Activated CD4-positive, alpha-beta T cell treated with anti-CD3 and anti-CD28 coated beads, Interleukin-2, amount 10 ng/mL, durations not matched to agents 24 days and 14 days (primary cell): ENCODE measurements at regions of chr2 and their contacts with region 1.

Region 1: GRCh38 chr2:96509114-96509846 is 4.1 kb upstream of the NEURL3 start:
- DNase-seq: peak; percentile 91
- H3K4me3 Mint-ChIP-seq: peak overlapping the region; percentile 28
- H3K27ac Mint-ChIP-seq: no peak overlapping the region
- H3K4me1 Mint-ChIP-seq: peaks cover 37% of the 10 kb centered on the region
- H3K27me3 Mint-ChIP-seq: no peaks in the 10 kb centered on the region

Region 2: DNA sequence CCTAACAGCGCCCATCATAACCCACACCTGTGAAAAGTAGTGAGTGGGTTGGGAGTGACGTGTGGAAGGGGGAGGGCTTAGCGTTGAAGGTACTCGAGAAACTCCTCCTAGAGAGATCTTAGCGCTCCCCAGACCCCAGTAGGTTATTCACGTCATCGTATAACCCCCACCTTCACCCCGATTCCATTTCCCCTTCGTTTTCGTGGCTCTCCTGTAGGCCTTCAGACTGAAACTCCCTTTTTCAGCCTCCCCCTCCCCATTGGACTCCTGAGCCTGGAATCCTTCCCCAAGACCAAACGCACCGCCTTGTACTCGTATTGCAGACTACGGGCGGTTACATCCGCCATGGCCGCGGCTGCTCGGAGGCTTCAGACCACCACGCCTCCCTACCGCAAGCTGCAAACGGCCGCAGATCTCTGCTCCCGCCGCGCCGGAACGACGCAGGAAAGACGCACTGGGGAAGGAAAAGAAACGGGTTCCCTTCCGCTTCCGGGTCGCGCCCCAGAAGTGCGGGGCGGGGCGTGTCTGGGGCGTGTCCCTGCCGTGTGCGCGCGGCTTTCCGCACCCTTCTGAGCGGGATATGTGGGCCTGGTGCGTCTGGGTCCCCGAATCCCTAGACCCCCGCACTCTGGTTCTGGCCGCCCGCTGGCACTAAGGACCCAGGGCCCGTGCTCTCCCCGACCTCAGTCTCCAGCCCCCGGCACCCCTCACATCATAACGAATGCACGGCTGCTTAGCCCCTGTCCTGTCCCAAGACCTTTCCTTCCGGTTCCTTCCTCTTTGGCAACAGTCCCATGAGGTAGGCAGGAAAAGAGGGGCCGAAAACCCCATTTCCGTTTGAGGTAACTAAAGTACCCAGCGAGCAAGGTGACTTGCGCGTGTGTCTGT is 203.9 kb before region 1 on chr2 and contains the start of gene SNRNP200:
- intact Hi-C with region 1: loop called (anchors 1 kb)
- DNase-seq: peak; percentile 97
- H3K4me3 Mint-ChIP-seq: peak within 1 kb of the TSS; percentile 100
- H3K27ac Mint-ChIP-seq: peak within 1 kb of the TSS; percentile 99
- H3K4me1 Mint-ChIP-seq: peaks cover 56% of the 10 kb centered on the region
- H3K27me3 Mint-ChIP-seq: no peaks in the 10 kb centered on the region
- total RNA-seq, gene SNRNP200: 197 and 203 TPM in 2 replicates

Region 3: DNA sequence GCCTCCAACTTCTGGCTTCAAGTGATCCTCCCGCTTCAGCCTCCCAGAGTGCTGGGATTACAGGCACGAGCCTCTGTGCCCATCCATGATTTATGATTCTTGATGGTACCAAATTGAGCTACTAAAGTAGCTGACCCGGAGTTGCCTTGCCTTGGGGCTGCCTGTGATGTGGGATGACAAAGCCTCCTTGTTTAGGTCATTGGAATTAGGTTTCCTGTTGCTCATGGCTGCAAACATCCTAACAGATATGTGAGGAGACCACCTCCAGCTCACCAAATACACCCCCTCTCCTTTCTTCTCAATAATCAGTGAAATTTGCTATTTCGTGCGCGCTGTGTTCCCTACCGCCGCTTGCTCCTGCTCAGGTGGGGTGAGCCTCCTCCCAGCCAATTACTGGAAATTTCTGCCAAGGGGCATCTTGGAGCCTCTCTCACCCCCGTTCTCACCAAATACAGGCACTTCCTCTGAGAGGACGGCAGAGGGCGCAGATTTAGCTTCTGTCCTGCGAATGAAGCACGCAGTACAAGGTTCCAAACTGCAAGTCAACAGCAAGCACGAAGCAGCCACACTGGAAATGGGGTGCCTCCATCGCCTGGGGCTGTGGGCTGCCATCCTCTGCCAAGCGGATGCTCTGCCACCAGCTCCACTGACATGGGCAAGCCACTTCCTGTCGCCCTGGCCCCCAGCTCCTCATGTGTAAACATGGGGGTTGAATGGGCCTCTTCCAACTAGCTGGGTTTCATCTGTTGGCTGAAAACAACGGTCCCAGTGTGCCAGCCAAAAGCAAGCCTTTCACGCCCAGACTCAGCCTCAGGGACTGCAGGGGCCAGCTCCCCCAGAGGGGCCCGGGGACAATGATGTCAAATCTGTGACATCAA is 102.0 kb before region 1 on chr2:
- intact Hi-C with region 1: loop called (anchors 1 kb)
- DNase-seq: peak; percentile 90
- H3K4me3 Mint-ChIP-seq: peak overlapping the region; percentile 41
- H3K27ac Mint-ChIP-seq: peak overlapping the region; percentile 80
- H3K4me1 Mint-ChIP-seq: peaks cover 13% of the 10 kb centered on the region
- H3K27me3 Mint-ChIP-seq: no peaks in the 10 kb centered on the region

Region 4: GRCh38 chr2:96485751-96486651 is 23.3 kb before region 1 on chr2:
- intact Hi-C with region 1: loop called (anchors 1 kb)
- DNase-seq: peak; percentile 97
- H3K4me3 Mint-ChIP-seq: peak overlapping the region; percentile 92
- H3K27ac Mint-ChIP-seq: peak overlapping the region; percentile 98
- H3K4me1 Mint-ChIP-seq: peaks cover 55% of the 10 kb centered on the region
- H3K27me3 Mint-ChIP-seq: peaks cover 2% of the 10 kb centered on the region

Region 5: DNA sequence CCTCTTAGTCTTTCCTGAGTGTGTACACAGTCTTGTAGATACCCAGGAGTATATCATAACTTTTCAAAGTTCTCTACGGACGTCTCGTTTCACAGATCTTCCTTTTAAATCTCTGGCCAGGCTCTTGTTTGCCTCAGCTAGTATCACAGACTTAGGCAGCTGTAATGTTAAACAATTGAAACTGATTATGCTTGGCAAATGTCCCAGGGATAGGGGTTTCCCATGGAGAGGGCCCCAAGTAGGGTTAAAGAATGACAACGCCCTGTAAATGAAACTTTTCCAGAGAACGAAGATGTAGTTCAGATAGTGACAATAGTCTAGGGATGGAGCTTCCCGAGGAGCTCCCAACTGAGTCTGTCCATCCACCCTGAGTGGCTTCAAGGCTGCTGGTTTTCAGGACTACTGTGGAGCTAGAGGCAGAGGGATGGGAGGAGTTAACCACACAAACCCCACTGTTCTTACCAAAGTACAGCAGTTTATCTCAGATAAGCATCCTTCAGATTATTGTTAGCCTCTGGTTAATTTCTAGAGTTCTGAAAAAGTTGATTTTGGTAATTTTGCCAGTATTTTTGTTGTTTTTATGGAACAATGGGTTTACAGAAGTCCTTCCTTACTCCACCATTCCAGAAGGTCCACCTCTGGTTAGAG is 13.2 kb before region 1 on chr2:
- intact Hi-C with region 1: no loop called
- DNase-seq: peak; percentile 48
- H3K4me3 Mint-ChIP-seq: no peak overlapping the region
- H3K27ac Mint-ChIP-seq: peak overlapping the region; percentile 6
- H3K4me1 Mint-ChIP-seq: peaks cover 34% of the 10 kb centered on the region
- H3K27me3 Mint-ChIP-seq: no peaks in the 10 kb centered on the region

Region 6: DNA sequence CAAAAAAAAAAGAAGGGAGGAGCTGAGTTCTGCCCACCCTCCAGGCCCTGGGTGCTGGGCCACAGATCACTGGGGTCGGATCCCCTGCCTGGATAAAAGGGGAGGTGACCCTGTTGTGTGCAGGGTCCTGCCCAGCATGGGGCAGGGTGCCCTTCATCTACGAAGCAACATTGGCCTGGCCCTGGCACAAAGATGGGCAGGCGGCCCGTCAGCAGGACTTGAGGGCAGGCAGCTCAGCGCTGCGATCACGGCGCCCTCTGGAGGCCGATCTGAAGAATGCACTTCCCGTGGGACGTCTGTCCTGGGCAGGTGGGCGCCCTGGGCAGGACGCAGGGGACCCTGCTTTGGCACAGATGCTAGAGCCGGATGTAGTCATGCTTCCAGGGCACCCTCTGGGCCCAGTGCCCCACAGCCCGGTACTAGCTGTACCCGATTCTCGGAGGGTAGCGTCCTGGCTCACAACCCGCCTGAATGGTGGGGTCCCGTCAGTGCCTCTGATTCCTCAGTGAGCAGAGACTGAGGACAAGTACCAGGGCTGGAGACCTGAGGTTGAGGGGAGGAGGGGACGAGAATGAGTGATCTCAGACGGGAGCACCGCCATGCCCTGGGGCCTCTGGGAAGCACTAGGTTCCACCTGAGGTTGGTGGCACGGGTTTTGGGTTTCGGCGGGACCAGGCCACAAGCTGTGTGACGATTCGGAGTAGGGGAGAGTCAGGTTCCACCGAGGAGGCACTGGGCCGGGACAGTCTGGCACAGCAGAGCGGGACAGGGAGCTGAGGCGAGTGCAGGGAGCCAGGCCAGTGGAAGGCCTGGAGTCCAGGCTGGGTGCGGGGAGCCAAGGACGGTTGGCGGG is 45.2 kb after region 1 on chr2:
- intact Hi-C with region 1: loop called (anchors 1 kb)
- DNase-seq: peak; percentile 91
- H3K4me3 Mint-ChIP-seq: no peak overlapping the region
- H3K27ac Mint-ChIP-seq: peak overlapping the region; percentile 37
- H3K4me1 Mint-ChIP-seq: peaks cover 25% of the 10 kb centered on the region
- H3K27me3 Mint-ChIP-seq: no peaks in the 10 kb centered on the region

Region 7: DNA sequence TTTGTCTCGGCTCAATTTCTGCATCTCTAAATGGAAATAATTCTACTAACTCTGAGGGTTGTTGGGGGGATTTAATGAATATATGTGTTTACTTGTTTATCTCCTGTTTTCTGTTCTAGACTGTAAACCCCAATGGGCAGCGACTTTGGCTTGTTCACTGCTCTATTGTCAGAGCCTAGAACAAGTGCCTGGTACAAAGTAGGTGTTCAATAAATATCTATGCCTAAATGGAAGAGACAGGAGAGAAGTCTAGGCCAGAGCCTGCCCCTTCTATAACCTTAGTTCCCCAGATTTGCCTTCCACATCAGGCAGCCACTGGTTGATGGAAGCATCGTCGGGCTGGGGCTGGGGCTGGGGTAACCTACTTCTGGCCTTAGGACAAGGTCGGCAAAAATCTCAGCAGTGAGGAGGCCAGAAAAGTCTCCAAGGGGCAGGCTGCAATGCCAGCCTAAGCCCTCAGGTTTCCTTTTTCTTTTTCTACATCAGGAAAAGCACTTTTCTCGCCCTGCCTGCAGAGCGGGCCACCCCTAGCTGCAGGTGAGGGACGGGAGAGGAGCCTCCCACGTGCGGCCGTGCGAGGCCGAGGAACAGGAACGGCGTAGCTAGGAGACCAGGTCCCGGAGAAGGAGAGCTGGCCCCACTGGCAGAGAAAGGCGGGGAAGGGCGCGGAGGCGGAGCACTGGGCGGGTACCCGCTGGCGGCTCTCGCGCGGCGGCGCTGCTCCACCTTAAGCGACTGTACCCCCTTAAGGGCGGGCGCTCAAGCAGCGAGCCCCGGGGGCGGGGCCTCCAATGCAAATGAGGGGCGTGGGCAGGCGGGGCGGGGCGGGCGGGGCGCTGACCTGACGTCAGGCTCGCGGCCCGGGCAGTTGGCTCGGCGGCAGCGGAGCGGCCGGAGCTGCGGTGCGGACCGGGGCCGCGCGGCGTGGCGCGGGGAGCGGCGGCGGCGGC is 251.0 kb after region 1 on chr2 and contains the start of gene CNNM4:
- intact Hi-C with region 1: no loop called
- DNase-seq: peak; percentile 97
- H3K4me3 Mint-ChIP-seq: peak within 1 kb of the TSS; percentile 85
- H3K27ac Mint-ChIP-seq: peak within 1 kb of the TSS; percentile 91
- H3K4me1 Mint-ChIP-seq: peaks cover 46% of the 10 kb centered on the region
- H3K27me3 Mint-ChIP-seq: no peaks in the 10 kb centered on the region
- total RNA-seq, gene CNNM4: 10.1 and 11.2 TPM in 2 replicates